CD14-positive monocyte (primary cell): ENCODE measurements at regions of chr3 and their contacts with region 1.

Region 1: GRCh38 chr3:15805756-15806266 is 8.0 kb upstream of the ANKRD28 start:
- DNase-seq: peak; percentile 87 to 97 (median 97)
- H3K4me3 ChIP-seq: peak overlapping the region in 1 of 3 experiments; percentile 39
- H3K4me3 Mint-ChIP-seq: peak overlapping the region in 1 of 2 donors; percentile 30
- H3K27ac ChIP-seq: peak overlapping the region in 1 of 2 donors; percentile 90
- H3K27ac Mint-ChIP-seq: peak overlapping the region; percentile 85 to 97 (median 93)
- H3K4me1 ChIP-seq: peaks cover 20 to 39% of the 10 kb centered on the region in 2 donors
- H3K4me1 Mint-ChIP-seq: peaks cover 44% of the 10 kb centered on the region
- H3K27me3 ChIP-seq: no peaks in the 10 kb centered on the region
- H3K27me3 Mint-ChIP-seq: peaks cover 0 to 5% (median 0%) of the 10 kb centered on the region in 3 donors
- CTCF ChIP-seq: no peak

Region 2: DNA sequence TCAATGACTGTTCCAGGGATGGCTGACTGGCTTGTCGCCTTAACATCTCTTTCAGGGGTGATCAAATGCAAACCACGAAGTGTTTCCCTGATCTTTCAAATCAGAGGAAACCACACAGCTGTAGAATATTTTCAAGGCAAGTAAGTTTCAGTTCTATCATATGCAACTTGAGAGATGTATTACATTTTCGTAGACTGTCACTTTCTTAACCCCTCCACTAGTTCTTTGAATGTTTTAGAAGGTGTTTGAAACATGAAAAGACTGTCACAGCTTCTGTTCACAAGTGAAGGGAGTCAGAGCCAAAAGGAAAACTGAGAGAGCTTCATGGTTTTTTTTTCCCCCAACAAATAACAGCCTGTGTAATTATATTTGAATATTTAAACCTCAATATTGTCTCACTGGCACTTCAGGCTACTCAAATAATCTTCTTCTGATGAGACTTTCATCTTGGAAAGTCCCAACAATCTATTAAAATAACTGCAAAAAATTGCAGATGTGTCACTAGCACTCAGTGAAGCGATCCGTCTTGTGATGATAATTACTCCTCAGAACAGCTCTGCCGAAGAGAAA is 625.7 kb before region 1 on chr3:
- intact Hi-C with region 1: no loop called
- DNase-seq: no peak
- H3K4me3 ChIP-seq: no peak overlapping the region
- H3K4me3 Mint-ChIP-seq: no peak overlapping the region
- H3K27ac ChIP-seq: no peak overlapping the region
- H3K27ac Mint-ChIP-seq: no peak overlapping the region
- H3K4me1 ChIP-seq: no peaks in the 10 kb centered on the region
- H3K4me1 Mint-ChIP-seq: no peaks in the 10 kb centered on the region
- H3K27me3 ChIP-seq: peaks cover 5% of the 10 kb centered on the region in 2 donors
- H3K27me3 Mint-ChIP-seq: peaks cover 8 to 22% (median 18%) of the 10 kb centered on the region in 3 donors
- CTCF ChIP-seq: no peak

Region 3: GRCh38 chr3:15682561-15683185 is 123.1 kb before region 1 on chr3:
- intact Hi-C with region 1: loop called in 1 of 2 experiments (anchors 10 kb)
- DNase-seq: peak; percentile 23 to 58 (median 39)
- H3K4me3 ChIP-seq: peak overlapping the region in 1 of 3 experiments; percentile 46
- H3K4me3 Mint-ChIP-seq: peak overlapping the region in 1 of 2 donors; percentile 70
- H3K27ac ChIP-seq: peak overlapping the region in 1 of 2 donors; percentile 62
- H3K27ac Mint-ChIP-seq: peak overlapping the region; percentile 68 to 86 (median 79)
- H3K4me1 ChIP-seq: peaks cover 36 to 45% of the 10 kb centered on the region in 2 donors
- H3K4me1 Mint-ChIP-seq: peaks cover 41% of the 10 kb centered on the region
- H3K27me3 ChIP-seq: no peaks in the 10 kb centered on the region
- H3K27me3 Mint-ChIP-seq: no peaks in the 10 kb centered on the region
- CTCF ChIP-seq: no peak